CD14-positive monocyte (primary cell): ENCODE measurements at regions of chr19 and their contacts with region 1.

Region 1: DNA sequence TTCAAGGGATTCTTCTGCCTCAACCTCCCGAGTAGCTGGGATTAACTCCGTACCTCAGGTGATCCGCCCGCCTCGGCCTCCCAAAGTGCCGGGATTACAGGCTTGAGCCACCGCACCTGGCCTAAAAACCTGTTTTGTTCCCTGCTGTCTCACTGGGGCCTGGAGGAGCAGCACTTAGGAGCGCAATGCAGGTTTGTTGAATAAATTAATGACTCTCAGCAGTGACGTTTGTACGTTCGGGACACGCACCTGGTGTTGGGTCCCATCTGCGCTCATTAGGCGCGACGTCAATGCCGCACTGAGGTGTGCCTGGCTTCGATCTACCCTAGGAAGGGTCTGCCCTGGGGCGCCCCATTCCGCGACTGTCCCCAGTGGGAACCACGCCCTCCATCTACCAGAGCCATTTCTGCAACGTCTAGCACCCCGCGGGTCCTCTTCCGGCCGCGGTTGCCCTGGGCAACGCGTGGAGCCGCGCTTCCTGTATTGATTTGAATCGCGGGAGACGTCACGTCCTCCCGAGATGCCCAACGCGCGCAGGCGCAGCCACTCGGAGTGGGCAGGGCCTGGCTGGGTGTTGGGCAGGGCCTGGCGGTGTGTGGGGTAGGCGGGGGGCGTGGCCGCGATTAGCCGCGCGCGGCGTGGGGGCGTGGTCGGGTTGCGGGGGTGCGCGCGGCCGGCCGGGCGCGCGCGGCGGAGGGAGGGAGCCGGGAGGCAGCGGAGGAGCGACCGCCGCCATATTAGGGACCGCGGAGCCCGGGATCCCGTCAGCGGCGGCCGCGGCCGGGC is at the start of gene FZR1:
- DNase-seq: peak; percentile 99
- H3K4me3 ChIP-seq: peak within 1 kb of the TSS; percentile 86 to 91 (median 87)
- H3K4me3 Mint-ChIP-seq: peak within 1 kb of the TSS; percentile 94 to 95
- H3K27ac ChIP-seq: peak within 1 kb of the TSS; percentile 58 to 92
- H3K27ac Mint-ChIP-seq: peak within 1 kb of the TSS; percentile 94 to 97 (median 96)
- H3K4me1 ChIP-seq: peaks cover 23 to 28% of the 10 kb centered on the region in 2 donors
- H3K4me1 Mint-ChIP-seq: peaks cover 43% of the 10 kb centered on the region
- H3K27me3 ChIP-seq: no peaks in the 10 kb centered on the region
- H3K27me3 Mint-ChIP-seq: peaks cover 0 to 3% (median 2%) of the 10 kb centered on the region in 3 donors
- CTCF ChIP-seq: no peak
- polyA plus RNA-seq, gene FZR1: 7.7 to 44.6 (median 9.4) TPM

Region 2: GRCh38 chr19:3434712-3435553 is 70.9 kb before region 1 on chr19:
- intact Hi-C with region 1: loop called in 1 of 2 experiments (anchors 10 kb)
- DNase-seq: peak; percentile 94 to 96 (median 95)
- H3K4me3 ChIP-seq: peak overlapping the region; percentile 59 to 84 (median 81)
- H3K4me3 Mint-ChIP-seq: peak overlapping the region; percentile 97 to 98
- H3K27ac ChIP-seq: peak overlapping the region; percentile 83 to 84
- H3K27ac Mint-ChIP-seq: peak overlapping the region; percentile 95 to 99 (median 98)
- H3K4me1 ChIP-seq: peaks cover 14 to 18% of the 10 kb centered on the region in 2 donors
- H3K4me1 Mint-ChIP-seq: peaks cover 17% of the 10 kb centered on the region
- H3K27me3 ChIP-seq: no peaks in the 10 kb centered on the region
- H3K27me3 Mint-ChIP-seq: no peaks in the 10 kb centered on the region
- CTCF ChIP-seq: no peak

Region 3: GRCh38 chr19:3538965-3539742 is 33.4 kb after region 1 on chr19 and contains the start of gene TEKTIP1:
- intact Hi-C with region 1: no loop called
- DNase-seq: no peak
- H3K4me3 ChIP-seq: no peak within 1 kb of the TSS
- H3K4me3 Mint-ChIP-seq: no peak within 1 kb of the TSS
- H3K27ac ChIP-seq: peak within 1 kb of the TSS in 1 of 2 donors; percentile 32
- H3K27ac Mint-ChIP-seq: peak within 1 kb of the TSS in 6 of 7 donors; percentile 3 to 77 (median 67)
- H3K4me1 ChIP-seq: peaks cover 0 to 5% of the 10 kb centered on the region in 2 donors
- H3K4me1 Mint-ChIP-seq: peaks cover 13% of the 10 kb centered on the region
- H3K27me3 ChIP-seq: no peaks in the 10 kb centered on the region
- H3K27me3 Mint-ChIP-seq: peaks cover 0 to 1% (median 0%) of the 10 kb centered on the region in 3 donors
- CTCF ChIP-seq: no peak
- polyA plus RNA-seq, gene TEKTIP1: 1.8 TPM in 1 of 3 donors, not detected in the others

Region 4: GRCh38 chr19:3557461-3558248 is 51.9 kb after region 1 on chr19 and contains the start of gene MFSD12:
- intact Hi-C with region 1: loop called (anchors 5 kb)
- DNase-seq: peak; percentile 92 to 95 (median 92)
- H3K4me3 ChIP-seq: peak within 1 kb of the TSS; percentile 89 to 98 (median 90)
- H3K4me3 Mint-ChIP-seq: peak within 1 kb of the TSS; percentile 100
- H3K27ac ChIP-seq: peak within 1 kb of the TSS; percentile 96
- H3K27ac Mint-ChIP-seq: peak within 1 kb of the TSS; percentile 93 to 98 (median 96)
- H3K4me1 ChIP-seq: peaks cover 53 to 60% of the 10 kb centered on the region in 2 donors
- H3K4me1 Mint-ChIP-seq: peaks cover 52% of the 10 kb centered on the region
- H3K27me3 ChIP-seq: no peaks in the 10 kb centered on the region
- H3K27me3 Mint-ChIP-seq: peaks cover 0 to 4% (median 0%) of the 10 kb centered on the region in 3 donors
- CTCF ChIP-seq: no peak
- polyA plus RNA-seq, gene MFSD12: 47.9 to 150 (median 55.5) TPM

Region 5: GRCh38 chr19:4007021-4007835 is 501.4 kb after region 1 on chr19 and contains the start of gene PIAS4:
- intact Hi-C with region 1: no loop called
- DNase-seq: peak; percentile 92 to 96 (median 95)
- H3K4me3 ChIP-seq: peak within 1 kb of the TSS; percentile 74 to 84 (median 79)
- H3K4me3 Mint-ChIP-seq: peak within 1 kb of the TSS; percentile 84 to 91
- H3K27ac ChIP-seq: peak within 1 kb of the TSS in 1 of 2 donors; percentile 71
- H3K27ac Mint-ChIP-seq: peak within 1 kb of the TSS; percentile 37 to 85 (median 69)
- H3K4me1 ChIP-seq: peaks cover 19 to 32% of the 10 kb centered on the region in 2 donors
- H3K4me1 Mint-ChIP-seq: peaks cover 30% of the 10 kb centered on the region
- H3K27me3 ChIP-seq: no peaks in the 10 kb centered on the region
- H3K27me3 Mint-ChIP-seq: peaks cover 0 to 1% (median 0%) of the 10 kb centered on the region in 3 donors
- CTCF ChIP-seq: no peak
- polyA plus RNA-seq, gene PIAS4: 2.3 to 8.1 (median 5.9) TPM